T-cell (primary cell): ENCODE measurements at regions of chr10 and their contacts with region 1.

Region 1: GRCh38 chr10:28241741-28242399 is 61.0 kb downstream of the MPP7 start:
- DNase-seq: peak in 22 of 35 experiments; percentile 3 to 72 (median 22)
- ATAC-seq: peak; percentile 63 to 75 (median 66)
- H3K4me3 ChIP-seq: no peak overlapping the region
- H3K4me3 Mint-ChIP-seq: no peak overlapping the region
- H3K27ac ChIP-seq: no peak overlapping the region
- H3K27ac Mint-ChIP-seq: no peak overlapping the region
- H3K4me1 ChIP-seq: peaks cover 0 to 14% of the 10 kb centered on the region in 2 experiments
- H3K4me1 Mint-ChIP-seq: peaks cover 32 to 42% (median 38%) of the 10 kb centered on the region in 3 donors
- H3K27me3 ChIP-seq: no peaks in the 10 kb centered on the region
- H3K27me3 Mint-ChIP-seq: no peaks in the 10 kb centered on the region

Region 2: GRCh38 chr10:27742195-27743011 is 499.5 kb before region 1 on chr10:
- CTCF ChIA-PET with region 1: interaction called, 4 to 23 read pairs
- POLR2A ChIA-PET with region 1: no interaction called
- DNase-seq: peak; percentile 53 to 79 (median 70)
- ATAC-seq: peak; percentile 86 to 90 (median 88)
- H3K4me3 ChIP-seq: peak overlapping the region; percentile 63 to 94
- H3K4me3 Mint-ChIP-seq: peak overlapping the region; percentile 75 to 82 (median 82)
- H3K27ac ChIP-seq: no peak overlapping the region
- H3K27ac Mint-ChIP-seq: no peak overlapping the region
- H3K4me1 ChIP-seq: peaks cover 21 to 54% of the 10 kb centered on the region in 2 experiments
- H3K4me1 Mint-ChIP-seq: peaks cover 34 to 42% (median 36%) of the 10 kb centered on the region in 3 donors
- H3K27me3 ChIP-seq: peaks cover 17 to 65% of the 10 kb centered on the region in 2 experiments
- H3K27me3 Mint-ChIP-seq: peaks cover 47 to 63% of the 10 kb centered on the region in 2 donors

Region 3: DNA sequence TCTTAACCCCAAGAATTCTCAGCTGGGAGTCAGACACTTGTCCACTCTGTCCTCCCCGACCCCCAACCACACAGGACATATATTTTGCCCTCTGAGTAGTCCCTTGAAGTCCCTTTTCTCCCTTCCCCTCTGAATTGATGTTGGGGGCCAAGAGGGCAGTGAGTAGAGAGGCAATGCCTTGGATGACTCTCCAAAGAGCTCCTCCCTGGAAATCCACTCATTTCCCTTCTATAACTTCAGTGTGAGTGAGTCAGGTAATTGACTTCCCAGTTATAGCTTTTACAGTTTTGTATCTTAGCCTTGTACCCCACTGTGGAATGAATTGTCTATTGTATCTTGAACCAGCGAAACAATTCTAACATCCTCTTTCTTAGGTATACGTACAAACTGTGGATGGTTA is 233.8 kb before region 1 on chr10:
- CTCF ChIA-PET with region 1: no interaction called
- POLR2A ChIA-PET with region 1: no interaction called
- DNase-seq: no peak
- ATAC-seq: no peak
- H3K4me3 ChIP-seq: no peak overlapping the region
- H3K4me3 Mint-ChIP-seq: no peak overlapping the region
- H3K27ac ChIP-seq: no peak overlapping the region
- H3K27ac Mint-ChIP-seq: no peak overlapping the region
- H3K4me1 ChIP-seq: no peaks in the 10 kb centered on the region
- H3K4me1 Mint-ChIP-seq: no peaks in the 10 kb centered on the region
- H3K27me3 ChIP-seq: peaks cover 0 to 3% of the 10 kb centered on the region in 2 experiments
- H3K27me3 Mint-ChIP-seq: peaks cover 9 to 30% of the 10 kb centered on the region in 2 donors